Common myeloid progenitor, CD34-positive (primary cell): ENCODE measurements at regions of chr16 and their contacts with region 1.

Region 1: GRCh38 chr16:2838928-2839327 is 8.8 kb downstream of the ZG16B start:
- DNase-seq: peak; percentile 61 to 83 (median 76)
- H3K4me3 ChIP-seq: no peak overlapping the region
- H3K27ac ChIP-seq: no peak overlapping the region
- H3K4me1 ChIP-seq: peaks cover 0 to 31% (median 25%) of the 10 kb centered on the region in 4 experiments
- H3K27me3 ChIP-seq: no peaks in the 10 kb centered on the region

Region 2: DNA sequence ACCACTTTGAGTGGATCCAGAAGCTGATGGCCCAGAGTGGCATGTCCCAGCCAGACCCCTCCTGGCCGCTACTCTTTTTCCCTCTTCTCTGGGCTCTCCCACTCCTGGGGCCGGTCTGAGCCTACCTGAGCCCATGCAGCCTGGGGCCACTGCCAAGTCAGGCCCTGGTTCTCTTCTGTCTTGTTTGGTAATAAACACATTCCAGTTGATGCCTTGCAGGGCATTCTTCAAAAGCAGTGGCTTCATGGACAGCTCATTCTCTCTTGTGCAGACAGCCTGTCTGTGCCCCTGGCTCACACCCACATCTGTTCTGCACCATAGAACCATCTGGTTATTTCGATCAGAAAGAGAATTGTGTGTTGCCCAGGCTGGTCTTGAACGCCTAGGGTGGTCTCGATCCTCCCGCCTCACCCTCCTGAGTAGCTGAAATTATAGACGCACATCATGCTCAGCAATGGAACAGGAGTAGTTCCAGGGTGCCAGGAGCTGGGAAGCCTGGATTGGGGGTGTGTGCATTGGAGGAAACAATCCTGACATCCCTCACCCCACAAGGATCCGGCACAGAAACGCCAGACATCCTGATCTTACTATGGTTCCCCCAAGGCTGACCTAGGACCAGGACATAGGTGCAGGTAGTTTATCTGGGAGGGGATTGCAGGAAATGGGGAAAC is 17.3 kb before region 1 on chr16:
- CTCF ChIA-PET with region 1: interaction called, 16 read pairs
- POLR2A ChIA-PET with region 1: no interaction called
- DNase-seq: no peak
- H3K4me3 ChIP-seq: no peak overlapping the region
- H3K27ac ChIP-seq: no peak overlapping the region
- H3K4me1 ChIP-seq: no peaks in the 10 kb centered on the region
- H3K27me3 ChIP-seq: no peaks in the 10 kb centered on the region

Region 3: GRCh38 chr16:2854700-2855309 is 15.9 kb after region 1 on chr16:
- CTCF ChIA-PET with region 1: interaction called, 21 read pairs
- POLR2A ChIA-PET with region 1: no interaction called
- DNase-seq: no peak
- H3K4me3 ChIP-seq: no peak overlapping the region
- H3K27ac ChIP-seq: no peak overlapping the region
- H3K4me1 ChIP-seq: peaks cover 0 to 20% (median 12%) of the 10 kb centered on the region in 4 experiments
- H3K27me3 ChIP-seq: peaks cover 0 to 61% (median 16%) of the 10 kb centered on the region in 5 experiments

Region 4: GRCh38 chr16:2867987-2868789 is 29.3 kb after region 1 on chr16:
- CTCF ChIA-PET with region 1: interaction called, 46 read pairs
- POLR2A ChIA-PET with region 1: interaction called, 7 read pairs
- DNase-seq: peak; percentile 97 to 99 (median 99)
- H3K4me3 ChIP-seq: peak overlapping the region; percentile 42 to 76 (median 65)
- H3K27ac ChIP-seq: peak overlapping the region; percentile 66 to 89
- H3K4me1 ChIP-seq: peaks cover 0 to 11% (median 7%) of the 10 kb centered on the region in 4 experiments
- H3K27me3 ChIP-seq: peaks cover 0 to 4% (median 0%) of the 10 kb centered on the region in 5 experiments

Region 5: GRCh38 chr16:2919511-2920255 is 80.8 kb after region 1 on chr16:
- CTCF ChIA-PET with region 1: interaction called, 47 read pairs
- POLR2A ChIA-PET with region 1: no interaction called
- DNase-seq: peak; percentile 66 to 89 (median 76)
- H3K4me3 ChIP-seq: no peak overlapping the region
- H3K27ac ChIP-seq: no peak overlapping the region
- H3K4me1 ChIP-seq: peaks cover 0 to 4% (median 2%) of the 10 kb centered on the region in 4 experiments
- H3K27me3 ChIP-seq: no peaks in the 10 kb centered on the region

Region 6: DNA sequence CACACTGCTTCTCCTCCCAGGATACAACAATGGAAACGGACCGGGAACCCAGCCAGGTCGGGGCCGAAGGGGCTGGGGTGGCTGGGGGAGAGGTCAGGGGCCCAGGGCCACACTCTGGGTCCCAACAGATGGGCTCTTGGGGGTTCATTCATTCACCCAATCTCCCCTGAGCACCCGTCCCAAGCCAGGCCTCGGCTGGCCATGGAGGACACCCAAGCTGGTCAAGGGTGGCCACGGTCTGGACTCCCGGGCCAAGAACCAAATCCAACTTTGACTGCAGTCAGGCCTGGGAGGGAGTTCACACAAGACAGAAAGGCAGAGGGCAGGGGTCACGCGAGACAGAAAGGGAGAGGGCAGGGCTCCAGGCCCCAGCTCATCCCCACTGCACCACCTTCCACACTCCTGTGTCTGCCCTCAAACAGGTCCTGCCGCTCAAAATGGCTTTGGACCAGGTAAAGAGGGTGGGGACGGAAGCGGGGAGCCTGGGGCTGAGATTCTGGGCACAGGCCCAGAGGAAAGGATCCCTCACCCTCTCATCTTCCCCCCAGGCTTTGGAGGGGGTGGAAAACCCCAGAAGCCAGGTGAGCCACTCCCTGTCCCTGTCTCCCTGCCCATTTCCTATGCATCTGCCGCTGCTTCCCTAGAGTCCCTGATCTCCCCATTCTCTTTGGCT is 153.6 kb after region 1 on chr16:
- CTCF ChIA-PET with region 1: no interaction called
- POLR2A ChIA-PET with region 1: no interaction called
- DNase-seq: no peak
- H3K4me3 ChIP-seq: no peak overlapping the region
- H3K27ac ChIP-seq: no peak overlapping the region
- H3K4me1 ChIP-seq: no peaks in the 10 kb centered on the region
- H3K27me3 ChIP-seq: no peaks in the 10 kb centered on the region